CD14-positive monocyte (primary cell): ENCODE measurements at regions of chr3 and their contacts with region 1.

Region 1: DNA sequence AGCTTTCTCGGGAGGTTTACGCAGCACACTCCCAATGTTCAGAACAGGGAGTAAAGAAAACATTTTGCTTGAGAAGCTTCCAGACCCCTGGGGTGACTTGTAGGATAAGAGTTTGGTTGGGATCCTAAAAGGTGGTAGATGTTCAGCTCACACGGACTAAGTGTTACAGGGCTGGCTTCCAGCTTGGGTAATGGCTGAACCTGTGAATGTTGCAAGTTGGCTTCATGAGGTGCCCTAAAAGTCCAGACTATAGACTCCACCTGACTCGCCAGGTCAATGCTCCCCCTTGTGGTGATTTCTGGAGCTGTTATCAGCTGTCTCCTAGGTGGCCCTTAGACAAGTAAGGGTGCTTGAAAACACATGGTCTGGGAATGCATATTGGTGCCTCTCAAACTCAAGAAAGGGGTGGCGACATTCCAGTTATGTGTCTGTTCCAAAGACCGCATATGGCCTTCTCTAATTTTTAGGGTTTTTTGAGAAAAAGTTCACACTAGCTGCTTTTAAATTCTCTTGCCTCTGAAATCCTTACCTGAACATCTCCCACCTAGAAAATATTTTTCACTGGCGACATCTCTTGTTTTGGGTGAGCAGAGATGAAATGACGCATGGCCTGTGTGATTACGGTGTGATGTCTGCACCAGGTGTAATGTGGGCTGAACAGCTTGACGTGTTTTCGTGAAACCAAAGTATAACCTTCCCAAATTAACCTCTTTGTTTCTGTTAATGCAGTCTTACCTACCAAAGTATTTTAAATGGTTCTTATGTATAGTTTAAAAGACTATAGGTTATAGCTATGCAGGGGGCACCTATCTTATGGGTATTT is 175.7 kb upstream of the KBTBD8 start:
- DNase-seq: peak; percentile 5 to 33 (median 6)
- H3K4me3 ChIP-seq: no peak overlapping the region
- H3K4me3 Mint-ChIP-seq: no peak overlapping the region
- H3K27ac ChIP-seq: no peak overlapping the region
- H3K27ac Mint-ChIP-seq: no peak overlapping the region
- H3K4me1 ChIP-seq: no peaks in the 10 kb centered on the region
- H3K4me1 Mint-ChIP-seq: no peaks in the 10 kb centered on the region
- H3K27me3 ChIP-seq: no peaks in the 10 kb centered on the region
- H3K27me3 Mint-ChIP-seq: peaks cover 0 to 2% (median 1%) of the 10 kb centered on the region in 3 donors
- CTCF ChIP-seq: peak; percentile 81

Region 2: GRCh38 chr3:66253790-66254620 is 568.4 kb before region 1 on chr3:
- intact Hi-C with region 1: loop called (anchors 5 kb)
- DNase-seq: peak in 2 of 3 donors; percentile 5 to 11
- H3K4me3 ChIP-seq: no peak overlapping the region
- H3K4me3 Mint-ChIP-seq: no peak overlapping the region
- H3K27ac ChIP-seq: no peak overlapping the region
- H3K27ac Mint-ChIP-seq: no peak overlapping the region
- H3K4me1 ChIP-seq: peaks cover 0 to 3% of the 10 kb centered on the region in 2 donors
- H3K4me1 Mint-ChIP-seq: peaks cover 7% of the 10 kb centered on the region
- H3K27me3 ChIP-seq: no peaks in the 10 kb centered on the region
- H3K27me3 Mint-ChIP-seq: no peaks in the 10 kb centered on the region
- CTCF ChIP-seq: peak; percentile 94

Region 3: GRCh38 chr3:66276705-66277274 is 545.6 kb before region 1 on chr3:
- intact Hi-C with region 1: loop called (anchors 5 kb)
- DNase-seq: peak; percentile 3 to 26 (median 21)
- H3K4me3 ChIP-seq: no peak overlapping the region
- H3K4me3 Mint-ChIP-seq: no peak overlapping the region
- H3K27ac ChIP-seq: no peak overlapping the region
- H3K27ac Mint-ChIP-seq: no peak overlapping the region
- H3K4me1 ChIP-seq: no peaks in the 10 kb centered on the region
- H3K4me1 Mint-ChIP-seq: no peaks in the 10 kb centered on the region
- H3K27me3 ChIP-seq: no peaks in the 10 kb centered on the region
- H3K27me3 Mint-ChIP-seq: no peaks in the 10 kb centered on the region
- CTCF ChIP-seq: peak; percentile 66

Region 4: GRCh38 chr3:66778777-66779176 is 43.6 kb before region 1 on chr3:
- intact Hi-C with region 1: no loop called
- DNase-seq: no peak
- H3K4me3 ChIP-seq: no peak overlapping the region
- H3K4me3 Mint-ChIP-seq: no peak overlapping the region
- H3K27ac ChIP-seq: no peak overlapping the region
- H3K27ac Mint-ChIP-seq: no peak overlapping the region
- H3K4me1 ChIP-seq: no peaks in the 10 kb centered on the region
- H3K4me1 Mint-ChIP-seq: no peaks in the 10 kb centered on the region
- H3K27me3 ChIP-seq: no peaks in the 10 kb centered on the region
- H3K27me3 Mint-ChIP-seq: peaks cover 0 to 6% (median 4%) of the 10 kb centered on the region in 3 donors
- CTCF ChIP-seq: no peak

Region 5: GRCh38 chr3:66836363-66837152 is 14.2 kb after region 1 on chr3:
- intact Hi-C with region 1: no loop called
- DNase-seq: no peak
- H3K4me3 ChIP-seq: no peak overlapping the region
- H3K4me3 Mint-ChIP-seq: no peak overlapping the region
- H3K27ac ChIP-seq: no peak overlapping the region
- H3K27ac Mint-ChIP-seq: no peak overlapping the region
- H3K4me1 ChIP-seq: no peaks in the 10 kb centered on the region
- H3K4me1 Mint-ChIP-seq: no peaks in the 10 kb centered on the region
- H3K27me3 ChIP-seq: no peaks in the 10 kb centered on the region
- H3K27me3 Mint-ChIP-seq: peaks cover 1 to 6% (median 2%) of the 10 kb centered on the region in 3 donors
- CTCF ChIP-seq: no peak